Common myeloid progenitor, CD34-positive (primary cell): ENCODE measurements at regions of chr5 and their contacts with region 1.

Region 1: DNA sequence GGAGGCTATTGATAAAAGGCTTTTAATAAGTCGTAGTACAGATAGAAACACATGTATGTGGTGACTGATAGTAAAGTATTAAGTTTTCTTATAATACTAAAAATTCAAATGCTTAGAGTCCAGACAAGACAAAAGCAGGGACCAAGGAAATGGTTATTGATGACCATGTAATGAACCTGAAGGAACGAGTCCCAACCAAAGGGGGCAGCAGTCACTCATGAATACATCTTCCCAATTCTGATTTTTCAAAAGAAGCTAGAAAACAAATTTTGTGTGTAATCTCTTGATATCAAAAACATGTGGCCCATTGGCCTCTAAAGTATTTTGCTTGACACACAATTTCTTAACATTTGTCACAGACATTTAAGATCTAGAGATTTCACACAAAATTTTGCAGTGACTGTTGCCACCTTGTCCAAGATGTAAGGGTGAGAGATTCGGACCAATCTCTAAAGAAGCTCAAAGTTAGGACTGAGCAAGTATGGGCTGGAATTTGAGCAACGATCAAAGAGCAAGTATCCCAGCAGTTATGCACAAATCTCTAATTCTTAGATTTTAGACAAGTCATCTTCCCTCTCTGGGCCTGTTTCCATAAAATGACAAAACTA is 66.8 kb downstream of the ARL15 start:
- DNase-seq: peak; percentile 43 to 65 (median 58)
- H3K4me3 ChIP-seq: no peak overlapping the region
- H3K27ac ChIP-seq: no peak overlapping the region
- H3K4me1 ChIP-seq: peaks cover 0 to 3% (median 0%) of the 10 kb centered on the region in 4 experiments
- H3K27me3 ChIP-seq: no peaks in the 10 kb centered on the region

Region 2: GRCh38 chr5:54415896-54416601 is 172.5 kb after region 1 on chr5:
- CTCF ChIA-PET with region 1: interaction called, 31 read pairs
- POLR2A ChIA-PET with region 1: no interaction called
- DNase-seq: peak in 2 of 3 donors; percentile 21 to 28
- H3K4me3 ChIP-seq: no peak overlapping the region
- H3K27ac ChIP-seq: no peak overlapping the region
- H3K4me1 ChIP-seq: no peaks in the 10 kb centered on the region
- H3K27me3 ChIP-seq: no peaks in the 10 kb centered on the region